ENCODE measurements at regions of chr2 and their contacts with region 1.

Region 1: DNA sequence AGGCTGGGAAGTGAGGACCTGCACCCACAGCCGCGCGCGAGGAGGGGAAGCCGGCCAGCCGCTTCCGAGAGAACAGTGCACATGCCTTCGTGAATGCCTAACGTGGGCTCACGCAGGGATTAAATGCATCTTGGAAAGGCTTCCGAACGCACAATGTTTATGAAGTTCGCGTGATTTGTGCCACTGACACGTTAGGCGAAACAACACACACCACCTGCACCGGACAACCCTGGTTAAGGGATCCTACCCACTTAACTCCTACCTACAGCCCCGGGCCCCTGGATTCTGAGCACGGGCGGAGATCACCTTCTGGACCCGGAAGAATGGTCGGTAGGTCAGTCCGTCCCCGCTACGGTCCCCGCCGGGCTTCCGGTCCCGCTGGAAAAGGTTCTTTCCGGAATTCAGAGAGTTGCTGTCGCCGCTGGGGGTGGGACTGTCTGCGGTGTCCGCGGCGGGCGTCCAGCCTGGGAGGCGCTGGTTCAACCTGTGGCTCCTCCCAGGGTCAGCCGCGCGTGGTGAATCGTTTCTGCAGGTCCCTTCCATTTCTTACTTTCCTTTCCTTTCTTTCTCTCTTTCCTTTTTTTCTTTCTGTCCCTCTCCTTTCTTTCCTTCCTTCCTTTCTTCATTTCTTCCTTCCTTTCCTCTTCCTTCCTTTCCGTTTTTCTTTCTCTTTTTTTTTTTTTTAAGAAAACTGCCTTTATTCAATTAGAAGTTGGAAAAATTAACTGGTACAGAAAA is at the start of gene MTIF2:
- DNase-seq: peak; percentile 97 to 98 (median 98)
- ATAC-seq: peak; percentile 99
- H3K4me3 ChIP-seq: peak within 1 kb of the TSS; percentile 91
- H3K27ac ChIP-seq: peak within 1 kb of the TSS; percentile 97
- H3K4me1 ChIP-seq: peaks cover 2% of the 10 kb centered on the region
- H3K27me3 ChIP-seq: no peaks in the 10 kb centered on the region
- total RNA-seq, gene MTIF2: 28.2 to 39.6 (median 35.8) TPM

Region 2: GRCh38 chr2:55232084-55232862 is 36.8 kb before region 1 on chr2 and contains the starts of genes CLHC1 and RPS27A:
- intact Hi-C with region 1: loop called in 1 of 4 experiments (anchors 5 kb)
- DNase-seq: peak; percentile 90 to 97 (median 96)
- ATAC-seq: peak; percentile 97
- H3K4me3 ChIP-seq: peak within 1 kb of the TSS; percentile 96
- H3K27ac ChIP-seq: peak within 1 kb of the TSS; percentile 76
- H3K4me1 ChIP-seq: peaks cover 5% of the 10 kb centered on the region
- H3K27me3 ChIP-seq: no peaks in the 10 kb centered on the region
- total RNA-seq, gene CLHC1: 6.6 to 9.0 (median 7.3) TPM
- total RNA-seq, gene RPS27A: 469 to 564 (median 541) TPM

Region 3: DNA sequence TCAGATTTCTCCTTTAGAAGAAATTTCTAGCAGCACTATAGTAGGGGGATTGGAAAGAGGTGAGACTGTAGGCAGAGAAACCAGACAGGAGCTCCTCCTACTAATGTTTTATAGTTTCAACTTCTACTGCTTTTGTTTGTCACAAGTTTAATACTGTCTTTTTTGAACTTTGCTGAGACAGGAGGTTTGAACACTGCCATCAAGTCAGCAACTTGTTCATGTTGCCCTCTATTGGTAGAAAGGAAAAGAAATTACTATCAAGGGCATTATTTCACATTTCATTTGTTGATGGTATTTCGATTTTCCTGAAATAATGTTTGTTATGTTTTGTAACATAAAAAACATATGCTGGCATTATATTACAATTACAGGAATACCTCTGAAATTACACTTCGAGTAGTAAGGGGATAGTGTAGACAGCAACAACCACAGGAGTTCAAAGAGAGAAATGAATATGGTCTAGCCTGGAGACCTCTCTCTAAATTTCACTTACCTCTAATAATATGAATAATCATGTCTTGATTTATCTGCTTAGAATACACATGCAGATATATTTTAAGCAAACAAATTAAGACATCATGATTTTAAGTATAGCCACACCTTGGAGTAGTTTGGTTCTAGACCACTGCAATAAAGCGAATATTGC is 163.0 kb after region 1 on chr2:
- intact Hi-C with region 1: loop called in 1 of 4 experiments (anchors 5 kb)
- DNase-seq: no peak
- ATAC-seq: peak; percentile 33 to 55
- H3K4me3 ChIP-seq: no peak overlapping the region
- H3K27ac ChIP-seq: no peak overlapping the region
- H3K4me1 ChIP-seq: no peaks in the 10 kb centered on the region
- H3K27me3 ChIP-seq: no peaks in the 10 kb centered on the region

Region 4: GRCh38 chr2:55617175-55618024 is 348.3 kb after region 1 on chr2 and contains the start of gene PPP4R3B:
- intact Hi-C with region 1: no loop called
- DNase-seq: peak; percentile 100
- ATAC-seq: peak; percentile 96 to 98
- H3K4me3 ChIP-seq: peak within 1 kb of the TSS; percentile 88
- H3K27ac ChIP-seq: peak within 1 kb of the TSS; percentile 96
- H3K4me1 ChIP-seq: peaks cover 8% of the 10 kb centered on the region
- H3K27me3 ChIP-seq: no peaks in the 10 kb centered on the region
- total RNA-seq, gene PPP4R3B: 24.9 to 34.1 (median 28.5) TPM